CD4-positive, alpha-beta T cell (primary cell): ENCODE measurements at regions of chr3 and their contacts with region 1.

Region 1: GRCh38 chr3:183766745-183767606 is 58.4 kb downstream of the MAP6D1 start:
- DNase-seq: peak; percentile 53 to 84 (median 64)
- ATAC-seq: peak; percentile 90
- H3K4me3 ChIP-seq: no peak overlapping the region
- H3K4me3 Mint-ChIP-seq: no peak overlapping the region
- H3K27ac ChIP-seq: no peak overlapping the region
- H3K27ac Mint-ChIP-seq: peak overlapping the region; percentile 47
- H3K4me1 ChIP-seq: peaks cover 10% of the 10 kb centered on the region
- H3K4me1 Mint-ChIP-seq: peaks cover 15% of the 10 kb centered on the region
- H3K27me3 ChIP-seq: no peaks in the 10 kb centered on the region
- H3K27me3 Mint-ChIP-seq: no peaks in the 10 kb centered on the region
- CTCF ChIP-seq: peak; percentile 91

Region 2: DNA sequence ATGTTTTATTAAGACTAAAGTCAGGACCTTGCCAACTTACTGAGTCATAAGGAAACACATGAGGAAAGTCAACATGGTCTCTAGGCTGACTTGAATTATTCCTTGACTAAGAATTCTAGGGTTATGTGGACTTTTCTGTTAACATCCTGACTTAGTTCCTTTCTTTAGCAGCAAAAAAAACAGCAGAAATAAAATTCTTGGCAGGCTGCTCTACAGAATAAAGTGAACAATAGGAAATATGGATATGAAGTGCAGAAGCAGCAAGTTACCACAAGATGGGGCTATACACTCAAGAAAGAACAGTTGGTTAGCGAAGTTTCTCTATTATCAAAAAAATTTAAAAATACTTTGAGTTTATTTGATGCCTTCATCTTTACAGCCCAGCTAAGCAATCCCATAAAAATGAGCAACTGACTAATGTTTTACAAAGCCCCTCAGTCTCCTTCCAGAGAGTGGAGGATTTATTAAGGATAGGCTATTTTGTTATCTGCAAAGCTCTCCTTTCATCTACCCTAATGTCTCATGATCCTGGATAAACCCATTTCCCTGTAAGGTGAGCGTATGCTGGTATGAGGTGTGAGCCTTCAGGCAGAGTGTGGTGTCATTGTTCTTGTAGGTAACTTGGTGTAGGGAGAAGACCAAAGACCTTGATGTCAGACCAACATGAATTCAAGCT is 644.6 kb before region 1 on chr3:
- CTCF ChIA-PET with region 1: interaction called, 4 read pairs
- POLR2A ChIA-PET with region 1: no interaction called
- intact Hi-C with region 1: loop called (anchors 1 to 2 kb)
- DNase-seq: peak in 4 of 14 experiments; percentile 14 to 73 (median 64)
- ATAC-seq: peak; percentile 73
- H3K4me3 ChIP-seq: no peak overlapping the region
- H3K4me3 Mint-ChIP-seq: no peak overlapping the region
- H3K27ac ChIP-seq: no peak overlapping the region
- H3K27ac Mint-ChIP-seq: no peak overlapping the region
- H3K4me1 ChIP-seq: no peaks in the 10 kb centered on the region
- H3K4me1 Mint-ChIP-seq: no peaks in the 10 kb centered on the region
- H3K27me3 ChIP-seq: no peaks in the 10 kb centered on the region
- H3K27me3 Mint-ChIP-seq: peaks cover 4% of the 10 kb centered on the region
- CTCF ChIP-seq: peak; percentile 92

Region 3: GRCh38 chr3:183178629-183179549 is 588.1 kb before region 1 on chr3:
- CTCF ChIA-PET with region 1: no interaction called
- POLR2A ChIA-PET with region 1: no interaction called
- intact Hi-C with region 1: loop called in 1 of 2 experiments (anchors 5 kb)
- DNase-seq: peak in 9 of 14 experiments; percentile 10 to 53 (median 26)
- ATAC-seq: peak; percentile 72
- H3K4me3 ChIP-seq: peak overlapping the region; percentile 53
- H3K4me3 Mint-ChIP-seq: peak overlapping the region; percentile 74
- H3K27ac ChIP-seq: no peak overlapping the region
- H3K27ac Mint-ChIP-seq: no peak overlapping the region
- H3K4me1 ChIP-seq: peaks cover 14% of the 10 kb centered on the region
- H3K4me1 Mint-ChIP-seq: peaks cover 9% of the 10 kb centered on the region
- H3K27me3 ChIP-seq: peaks cover 18 to 26% of the 10 kb centered on the region in 2 experiments
- H3K27me3 Mint-ChIP-seq: peaks cover 39% of the 10 kb centered on the region
- CTCF ChIP-seq: no peak

Region 4: DNA sequence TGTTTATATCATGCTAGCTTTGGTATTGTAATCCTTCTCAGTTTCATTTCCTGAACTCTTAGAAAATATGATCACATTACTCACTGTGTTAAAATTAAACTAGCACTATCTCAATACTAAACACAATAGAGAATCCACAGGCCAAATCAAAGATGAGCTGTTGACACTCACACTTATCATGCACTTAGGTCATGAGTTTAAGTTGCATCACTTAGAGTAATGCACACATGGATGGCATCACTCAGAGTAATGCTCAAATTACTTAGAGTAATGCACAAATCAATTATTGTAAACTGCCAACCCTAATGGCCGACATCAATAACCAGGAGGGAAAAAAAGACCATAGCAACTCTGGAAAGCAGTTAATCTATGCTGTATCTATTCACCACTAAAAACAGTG is 298.6 kb before region 1 on chr3:
- CTCF ChIA-PET with region 1: interaction called, 7 read pairs
- POLR2A ChIA-PET with region 1: interaction called, 6 read pairs
- intact Hi-C with region 1: loop called (anchors 1 kb)
- DNase-seq: no peak
- ATAC-seq: no peak
- H3K4me3 ChIP-seq: no peak overlapping the region
- H3K4me3 Mint-ChIP-seq: no peak overlapping the region
- H3K27ac ChIP-seq: no peak overlapping the region
- H3K27ac Mint-ChIP-seq: no peak overlapping the region
- H3K4me1 ChIP-seq: peaks cover 7% of the 10 kb centered on the region
- H3K4me1 Mint-ChIP-seq: peaks cover 5% of the 10 kb centered on the region
- H3K27me3 ChIP-seq: no peaks in the 10 kb centered on the region
- H3K27me3 Mint-ChIP-seq: no peaks in the 10 kb centered on the region
- CTCF ChIP-seq: no peak

Region 5: DNA sequence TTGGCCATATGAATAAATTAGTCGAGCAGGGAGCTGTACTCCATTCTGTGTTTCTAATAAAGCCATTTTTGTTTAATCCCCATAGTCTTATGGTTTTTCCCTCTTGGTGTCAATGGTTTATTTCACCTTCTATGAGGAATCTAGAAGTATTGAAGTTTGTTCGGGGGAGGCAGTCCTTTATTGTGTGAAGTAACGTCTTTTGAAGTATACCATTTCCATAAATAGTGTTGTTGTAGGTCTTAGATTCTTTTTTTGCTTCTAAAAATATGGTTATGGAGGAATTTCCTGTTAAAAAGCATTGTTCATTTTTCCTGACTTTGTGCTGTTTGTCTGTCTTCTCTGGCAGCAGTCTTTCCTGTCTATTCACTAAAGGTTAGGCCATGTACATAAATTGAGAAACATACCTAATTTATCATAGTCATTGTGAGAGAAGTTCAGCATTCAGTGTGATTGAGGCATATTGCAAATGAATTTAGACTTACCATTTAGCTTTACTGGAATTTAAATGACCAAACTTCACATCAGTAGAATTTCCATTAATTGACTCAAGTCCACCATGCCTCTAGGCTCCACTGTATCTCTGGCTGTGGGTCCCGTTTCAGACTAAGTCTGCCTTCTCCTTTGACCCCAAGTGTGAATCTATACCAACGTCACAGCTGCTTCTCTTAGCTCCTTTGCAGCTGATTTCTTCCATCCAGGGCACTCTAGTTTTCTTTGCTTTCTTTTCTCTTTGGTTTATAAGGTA is 32.1 kb before region 1 on chr3:
- CTCF ChIA-PET with region 1: no interaction called
- POLR2A ChIA-PET with region 1: no interaction called
- intact Hi-C with region 1: no loop called
- DNase-seq: no peak
- ATAC-seq: no peak
- H3K4me3 ChIP-seq: no peak overlapping the region
- H3K4me3 Mint-ChIP-seq: no peak overlapping the region
- H3K27ac ChIP-seq: no peak overlapping the region
- H3K27ac Mint-ChIP-seq: no peak overlapping the region
- H3K4me1 ChIP-seq: no peaks in the 10 kb centered on the region
- H3K4me1 Mint-ChIP-seq: no peaks in the 10 kb centered on the region
- H3K27me3 ChIP-seq: no peaks in the 10 kb centered on the region
- H3K27me3 Mint-ChIP-seq: no peaks in the 10 kb centered on the region
- CTCF ChIP-seq: no peak

Region 6: GRCh38 chr3:183812761-183813445 is 45.9 kb after region 1 on chr3:
- CTCF ChIA-PET with region 1: no interaction called
- POLR2A ChIA-PET with region 1: no interaction called
- intact Hi-C with region 1: no loop called
- DNase-seq: no peak
- ATAC-seq: no peak
- H3K4me3 ChIP-seq: no peak overlapping the region
- H3K4me3 Mint-ChIP-seq: no peak overlapping the region
- H3K27ac ChIP-seq: no peak overlapping the region
- H3K27ac Mint-ChIP-seq: peak overlapping the region; percentile 30
- H3K4me1 ChIP-seq: peaks cover 12% of the 10 kb centered on the region
- H3K4me1 Mint-ChIP-seq: peaks cover 19% of the 10 kb centered on the region
- H3K27me3 ChIP-seq: no peaks in the 10 kb centered on the region
- H3K27me3 Mint-ChIP-seq: no peaks in the 10 kb centered on the region
- CTCF ChIP-seq: no peak

Region 7: GRCh38 chr3:183844606-183845005 is 77.6 kb after region 1 on chr3:
- CTCF ChIA-PET with region 1: no interaction called
- POLR2A ChIA-PET with region 1: no interaction called
- intact Hi-C with region 1: no loop called
- DNase-seq: no peak
- ATAC-seq: no peak
- H3K4me3 ChIP-seq: no peak overlapping the region
- H3K4me3 Mint-ChIP-seq: no peak overlapping the region
- H3K27ac ChIP-seq: no peak overlapping the region
- H3K27ac Mint-ChIP-seq: no peak overlapping the region
- H3K4me1 ChIP-seq: no peaks in the 10 kb centered on the region
- H3K4me1 Mint-ChIP-seq: no peaks in the 10 kb centered on the region
- H3K27me3 ChIP-seq: no peaks in the 10 kb centered on the region
- H3K27me3 Mint-ChIP-seq: no peaks in the 10 kb centered on the region
- CTCF ChIP-seq: no peak